ENCODE measurements at regions of chr4 and their contacts with region 1.

Region 1: GRCh38 chr4:71860643-71861042 is 76.8 kb upstream of the GC start:
- DNase-seq: peak; percentile 19
- ATAC-seq: no peak
- H3K4me3 ChIP-seq: no peak overlapping the region
- H3K27ac ChIP-seq: no peak overlapping the region
- H3K4me1 ChIP-seq: no peaks in the 10 kb centered on the region
- H3K27me3 ChIP-seq: no peaks in the 10 kb centered on the region
- CTCF ChIP-seq: no peak
- POLR2A ChIP-seq: no peak
- RAD21 ChIP-seq: no peak

Region 2: GRCh38 chr4:70936200-70936787 is 924.3 kb before region 1 on chr4:
- CTCF ChIA-PET with region 1: no interaction called
- POLR2A ChIA-PET with region 1: no interaction called
- RAD21 ChIA-PET with region 1: no interaction called
- intact Hi-C with region 1: loop called (anchors 10 kb)
- DNase-seq: no peak
- ATAC-seq: no peak
- H3K4me3 ChIP-seq: no peak overlapping the region
- H3K27ac ChIP-seq: no peak overlapping the region
- H3K4me1 ChIP-seq: no peaks in the 10 kb centered on the region
- H3K27me3 ChIP-seq: no peaks in the 10 kb centered on the region
- CTCF ChIP-seq: no peak
- POLR2A ChIP-seq: no peak
- RAD21 ChIP-seq: no peak

Region 3: GRCh38 chr4:71841336-71841735 is 19.3 kb before region 1 on chr4:
- CTCF ChIA-PET with region 1: no interaction called
- POLR2A ChIA-PET with region 1: no interaction called
- RAD21 ChIA-PET with region 1: no interaction called
- intact Hi-C with region 1: no loop called
- DNase-seq: no peak
- ATAC-seq: no peak
- H3K4me3 ChIP-seq: no peak overlapping the region
- H3K27ac ChIP-seq: no peak overlapping the region
- H3K4me1 ChIP-seq: no peaks in the 10 kb centered on the region
- H3K27me3 ChIP-seq: no peaks in the 10 kb centered on the region
- CTCF ChIP-seq: no peak
- POLR2A ChIP-seq: no peak
- RAD21 ChIP-seq: no peak